ENCODE measurements at regions of chr15 and their contacts with region 1.

Region 1: GRCh38 chr15:48868536-48868935 is 9.4 kb upstream of the EID1 start:
- DNase-seq: no peak
- ATAC-seq: no peak
- H3K4me3 ChIP-seq: no peak overlapping the region
- H3K27ac ChIP-seq: no peak overlapping the region
- H3K4me1 ChIP-seq: no peaks in the 10 kb centered on the region
- H3K27me3 ChIP-seq: no peaks in the 10 kb centered on the region; a peak in 1 of 4 replicates
- CTCF ChIP-seq: no peak
- EP300 ChIP-seq: no peak
- POLR2A ChIP-seq: no peak
- RAD21 ChIP-seq: no peak

Region 2: GRCh38 chr15:49155110-49155833 is 286.7 kb after region 1 on chr15 and contains the start of gene COPS2:
- CTCF ChIA-PET with region 1: no interaction called
- POLR2A ChIA-PET with region 1: no interaction called
- RAD21 ChIA-PET with region 1: no interaction called
- SMC1A ChIA-PET with region 1: no interaction called
- in situ Hi-C with region 1: loop called (anchors 5 kb)
- intact Hi-C with region 1: no loop called
- DNase-seq: peak; percentile 98
- ATAC-seq: peak; percentile 94
- H3K4me3 ChIP-seq: peak within 1 kb of the TSS; percentile 97
- H3K27ac ChIP-seq: peak within 1 kb of the TSS; percentile 84
- H3K4me1 ChIP-seq: no peaks in the 10 kb centered on the region
- H3K27me3 ChIP-seq: no peaks in the 10 kb centered on the region
- CTCF ChIP-seq: no peak
- EP300 ChIP-seq: no peak
- POLR2A ChIP-seq: peak; percentile 95
- RAD21 ChIP-seq: no peak
- polyA plus RNA-seq, gene COPS2: 74.5 to 85.9 TPM